Activated CD8-positive, alpha-beta T cell treated with anti-CD3 and anti-CD28 coated beads, Interleukin-2, amount 10 ng/mL, durations not matched to agents 7 days and 5 days (primary cell): ENCODE measurements at regions of chr7 and their contacts with region 1.

Region 1: DNA sequence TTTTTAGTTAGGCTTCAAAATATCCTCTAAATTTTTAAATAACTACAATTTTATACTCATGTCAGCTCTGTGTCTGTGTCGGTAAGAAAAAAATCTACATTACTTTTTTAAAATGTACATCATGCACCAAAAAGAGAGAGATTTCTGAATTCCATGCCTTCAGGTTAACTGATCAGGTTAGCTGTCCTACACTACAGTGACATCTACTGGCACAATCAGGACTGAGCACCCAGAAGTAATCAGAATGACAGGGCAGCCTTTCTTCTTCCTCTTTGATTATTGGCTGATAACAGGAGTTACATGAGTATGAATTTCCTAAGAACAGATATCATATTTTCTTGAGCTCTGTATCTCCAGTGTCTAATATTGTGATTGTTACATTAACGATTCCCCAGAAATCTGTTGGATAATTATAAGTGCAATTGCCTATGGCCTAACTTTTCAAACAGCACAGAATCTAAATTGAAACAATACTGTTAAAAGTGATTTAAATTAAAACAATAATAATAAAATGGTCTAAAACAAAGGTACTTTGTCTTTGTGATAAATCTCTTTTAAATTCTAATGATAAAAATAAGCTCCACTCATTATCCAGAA is 41.8 kb upstream of the HYCC1 start:
- DNase-seq: peak; percentile 75
- ATAC-seq: peak; percentile 94
- H3K4me3 Mint-ChIP-seq: no peak overlapping the region
- H3K27ac Mint-ChIP-seq: no peak overlapping the region
- H3K4me1 Mint-ChIP-seq: peaks cover 6% of the 10 kb centered on the region
- H3K27me3 Mint-ChIP-seq: peaks cover 7% of the 10 kb centered on the region

Region 2: GRCh38 chr7:22559829-22560489 is 495.7 kb before region 1 on chr7:
- CTCF ChIA-PET with region 1: interaction called, 41 read pairs
- POLR2A ChIA-PET with region 1: no interaction called
- DNase-seq: peak; percentile 86
- ATAC-seq: peak; percentile 79
- H3K4me3 Mint-ChIP-seq: no peak overlapping the region
- H3K27ac Mint-ChIP-seq: no peak overlapping the region
- H3K4me1 Mint-ChIP-seq: peaks cover 51% of the 10 kb centered on the region
- H3K27me3 Mint-ChIP-seq: peaks cover 14% of the 10 kb centered on the region

Region 3: DNA sequence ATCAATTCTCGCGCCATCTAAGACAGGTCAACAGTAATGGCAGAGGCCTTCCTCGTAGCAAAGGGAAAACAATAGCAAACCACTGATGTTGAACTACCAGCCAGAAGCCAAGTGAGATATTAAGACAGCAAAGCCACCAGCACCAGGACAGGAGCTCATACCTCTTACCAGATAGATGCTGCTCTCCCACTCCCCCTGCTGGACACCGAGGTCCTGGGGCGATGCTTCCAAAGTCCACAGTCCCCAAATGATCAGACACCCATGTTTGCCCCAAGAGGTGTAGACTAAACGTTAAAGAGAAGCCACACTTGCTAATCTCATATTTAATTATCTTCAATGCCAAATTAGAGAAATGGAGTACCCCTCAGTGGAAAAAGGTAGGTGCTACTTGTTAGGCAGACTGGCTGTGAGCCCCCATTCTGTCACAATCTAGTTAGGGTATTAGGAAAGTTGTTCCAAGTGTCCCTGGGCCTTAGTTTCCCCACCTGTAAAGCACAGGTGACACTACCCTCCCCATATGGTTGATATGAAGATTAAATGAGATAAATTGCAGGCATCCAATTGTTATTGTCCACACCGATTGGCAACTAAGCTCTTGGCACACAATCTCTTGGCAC is 273.0 kb before region 1 on chr7:
- CTCF ChIA-PET with region 1: interaction called, 19 read pairs
- POLR2A ChIA-PET with region 1: no interaction called
- DNase-seq: peak; percentile 85
- ATAC-seq: peak; percentile 92
- H3K4me3 Mint-ChIP-seq: no peak overlapping the region
- H3K27ac Mint-ChIP-seq: no peak overlapping the region
- H3K4me1 Mint-ChIP-seq: no peaks in the 10 kb centered on the region
- H3K27me3 Mint-ChIP-seq: peaks cover 22% of the 10 kb centered on the region

Region 4: DNA sequence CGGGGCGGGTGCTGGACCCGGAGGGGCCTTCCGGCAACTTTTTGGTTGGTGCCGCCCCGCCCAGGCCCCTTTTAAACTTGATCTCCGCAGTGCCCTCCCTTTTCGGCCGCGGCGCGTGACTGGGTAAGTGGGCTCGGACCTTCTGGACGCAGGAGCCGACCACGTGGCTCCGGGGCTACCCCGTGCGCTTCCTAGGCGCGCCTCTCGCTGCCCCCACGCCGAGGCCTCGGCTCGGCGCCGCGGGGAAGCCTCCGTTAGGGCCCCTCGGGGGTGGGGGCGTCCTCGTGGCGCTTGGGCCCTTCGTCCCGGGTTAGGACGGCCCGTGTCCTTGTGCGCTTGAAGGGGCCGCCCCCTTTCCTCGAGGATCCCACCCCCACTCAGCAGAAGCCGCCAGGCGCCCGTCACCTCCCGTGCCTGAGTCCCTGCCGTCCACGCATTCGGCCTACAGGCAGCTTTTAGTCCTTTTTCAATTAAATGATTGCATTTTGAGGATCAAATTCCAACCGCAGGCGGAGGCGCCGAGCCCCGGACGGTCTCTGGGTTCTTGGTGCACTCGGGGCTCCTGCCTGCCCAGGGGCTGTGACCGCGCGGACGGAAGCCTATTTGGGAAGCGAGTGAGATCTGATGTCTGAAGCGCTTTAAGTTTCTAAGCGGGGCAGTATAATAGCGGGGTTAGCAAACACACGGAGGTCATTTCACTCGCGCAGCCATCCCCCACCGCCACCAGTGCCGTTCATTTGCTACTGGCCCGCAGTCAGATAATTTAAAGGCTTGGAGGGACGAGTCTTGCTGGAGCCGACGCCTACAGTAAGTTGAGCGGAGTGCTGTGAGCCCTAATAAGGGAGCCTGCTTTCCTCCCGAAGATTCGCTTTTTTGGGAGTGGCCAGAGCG is 201.3 kb before region 1 on chr7:
- CTCF ChIA-PET with region 1: interaction called, 31 read pairs
- POLR2A ChIA-PET with region 1: no interaction called
- DNase-seq: peak; percentile 85
- ATAC-seq: peak; percentile 85
- H3K4me3 Mint-ChIP-seq: peak overlapping the region; percentile 99
- H3K27ac Mint-ChIP-seq: peak overlapping the region; percentile 93
- H3K4me1 Mint-ChIP-seq: peaks cover 39% of the 10 kb centered on the region
- H3K27me3 Mint-ChIP-seq: peaks cover 15% of the 10 kb centered on the region

Region 5: GRCh38 chr7:22972207-22972606 is 83.5 kb before region 1 on chr7:
- CTCF ChIA-PET with region 1: interaction called, 24 read pairs
- POLR2A ChIA-PET with region 1: no interaction called
- DNase-seq: no peak
- ATAC-seq: no peak
- H3K4me3 Mint-ChIP-seq: no peak overlapping the region
- H3K27ac Mint-ChIP-seq: no peak overlapping the region
- H3K4me1 Mint-ChIP-seq: no peaks in the 10 kb centered on the region
- H3K27me3 Mint-ChIP-seq: no peaks in the 10 kb centered on the region

Region 6: DNA sequence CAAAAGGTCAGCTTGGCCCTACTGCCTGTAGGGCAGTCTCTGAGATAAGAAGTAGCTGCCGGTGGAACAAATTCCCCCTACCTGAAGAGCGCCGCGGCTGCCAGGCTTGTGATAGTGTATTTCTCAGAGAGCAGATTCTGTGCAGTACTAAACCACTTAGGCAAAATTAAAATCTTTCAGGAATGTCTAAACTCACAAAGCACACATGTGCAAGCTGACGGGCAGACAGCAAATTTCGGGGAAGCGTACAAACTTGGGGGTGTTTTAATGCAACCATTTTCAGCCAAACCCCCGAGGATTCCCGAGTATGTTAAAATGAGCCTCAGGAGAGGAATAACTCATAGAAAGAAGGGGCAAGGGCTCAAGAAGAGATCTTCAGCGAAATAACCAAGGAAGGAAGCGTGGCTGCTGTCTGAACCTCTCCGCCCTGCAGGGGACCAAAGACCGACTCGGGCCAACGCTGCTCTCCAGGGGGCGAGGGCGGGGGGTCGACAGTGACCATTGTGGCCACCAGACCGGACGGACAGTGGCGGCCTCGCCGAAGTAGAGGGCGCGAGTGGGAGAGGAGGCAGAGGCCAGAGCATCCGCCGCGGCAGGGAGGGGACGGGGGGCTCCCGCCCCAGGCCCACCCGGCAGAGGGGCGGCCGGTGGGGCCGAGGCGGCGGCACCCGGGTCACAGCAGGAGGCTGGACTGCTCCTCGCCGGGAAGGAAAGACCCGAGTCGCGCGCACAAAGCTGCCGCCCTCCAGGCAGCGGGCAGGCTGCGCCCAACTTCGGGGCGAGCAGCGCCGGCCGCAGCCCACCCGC is 42.6 kb before region 1 on chr7:
- CTCF ChIA-PET with region 1: interaction called, 22 read pairs
- POLR2A ChIA-PET with region 1: no interaction called
- DNase-seq: peak; percentile 35
- ATAC-seq: no peak
- H3K4me3 Mint-ChIP-seq: no peak overlapping the region
- H3K27ac Mint-ChIP-seq: no peak overlapping the region
- H3K4me1 Mint-ChIP-seq: peaks cover 33% of the 10 kb centered on the region
- H3K27me3 Mint-ChIP-seq: no peaks in the 10 kb centered on the region

Region 7: GRCh38 chr7:23043441-23043840 is 12.2 kb before region 1 on chr7:
- CTCF ChIA-PET with region 1: interaction called, 29 read pairs
- POLR2A ChIA-PET with region 1: no interaction called
- DNase-seq: no peak
- ATAC-seq: no peak
- H3K4me3 Mint-ChIP-seq: no peak overlapping the region
- H3K27ac Mint-ChIP-seq: no peak overlapping the region
- H3K4me1 Mint-ChIP-seq: peaks cover 7% of the 10 kb centered on the region
- H3K27me3 Mint-ChIP-seq: peaks cover under 1% of the 10 kb centered on the region

Region 8: DNA sequence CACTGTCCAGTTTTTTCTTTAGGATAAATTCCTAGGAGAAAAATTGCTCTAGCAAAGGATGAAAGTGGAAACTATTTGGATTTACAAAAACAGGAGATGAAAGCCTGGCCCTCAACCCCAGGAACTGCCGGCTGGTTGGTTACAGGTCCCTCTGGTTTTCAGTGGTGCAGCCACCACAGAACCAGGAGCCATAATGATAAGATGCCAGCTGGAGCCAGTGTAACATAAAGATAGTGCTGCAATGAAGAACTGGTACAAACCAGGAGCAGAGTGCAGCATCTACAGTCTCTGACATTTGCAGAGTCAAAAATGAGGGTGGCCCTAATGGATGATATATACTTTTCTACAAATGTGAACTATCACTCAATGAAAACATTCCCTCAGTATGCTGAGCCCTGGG is 105.8 kb after region 1 on chr7:
- CTCF ChIA-PET with region 1: no interaction called
- POLR2A ChIA-PET with region 1: no interaction called
- DNase-seq: no peak
- ATAC-seq: no peak
- H3K4me3 Mint-ChIP-seq: no peak overlapping the region
- H3K27ac Mint-ChIP-seq: no peak overlapping the region
- H3K4me1 Mint-ChIP-seq: no peaks in the 10 kb centered on the region
- H3K27me3 Mint-ChIP-seq: no peaks in the 10 kb centered on the region